ENCODE measurements at regions of chr10 and their contacts with region 1.

Region 1: DNA sequence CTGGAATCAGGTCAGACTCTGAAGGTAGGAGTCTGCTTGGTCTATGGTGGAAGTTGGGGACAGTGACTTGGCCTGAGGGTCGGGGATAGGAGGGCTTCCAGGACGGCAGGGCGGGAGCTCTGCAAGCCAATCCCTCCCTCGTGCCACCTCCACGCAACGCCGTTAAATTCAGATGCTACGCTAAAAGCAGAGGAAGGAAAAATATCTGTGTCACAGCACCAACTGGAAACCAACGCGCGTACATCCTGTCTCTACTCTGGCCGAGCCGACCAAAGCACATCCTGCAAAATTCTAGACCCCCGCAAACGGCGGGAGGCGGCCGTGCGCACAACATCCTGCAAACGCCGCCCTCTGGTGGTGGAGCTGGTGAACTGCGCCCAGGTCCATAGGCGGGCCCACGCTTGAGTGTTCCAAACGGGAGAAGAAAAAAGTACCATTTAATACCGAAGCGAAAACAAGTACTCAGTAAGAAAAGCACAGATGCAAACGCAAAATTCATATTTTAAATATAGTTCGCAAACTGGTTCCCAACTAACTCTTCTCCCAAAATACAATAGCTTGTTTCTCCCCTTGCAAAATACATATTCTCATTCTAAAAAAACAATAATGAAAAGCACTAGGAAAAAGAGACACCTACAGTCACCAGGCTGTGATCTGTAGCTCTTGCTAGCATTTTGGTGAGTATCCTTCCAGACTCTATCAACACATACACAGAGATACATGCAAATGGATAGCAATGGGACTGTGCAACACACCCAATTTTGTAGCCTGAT is 45.7 kb upstream of the HSPA12A start:
- DNase-seq: peak; percentile 76
- H3K4me3 ChIP-seq: no peak overlapping the region
- H3K27ac ChIP-seq: no peak overlapping the region
- H3K4me1 ChIP-seq: no peaks in the 10 kb centered on the region
- H3K27me3 ChIP-seq: no peaks in the 10 kb centered on the region
- CTCF ChIP-seq: peak; percentile 100

Region 2: GRCh38 chr10:116627386-116627933 is 160.6 kb before region 1 on chr10:
- intact Hi-C with region 1: loop called (anchors 5 kb)
- DNase-seq: peak; percentile 71
- H3K4me3 ChIP-seq: peak overlapping the region; percentile 51
- H3K27ac ChIP-seq: no peak overlapping the region
- H3K4me1 ChIP-seq: no peaks in the 10 kb centered on the region
- H3K27me3 ChIP-seq: no peaks in the 10 kb centered on the region
- CTCF ChIP-seq: peak; percentile 48

Region 3: DNA sequence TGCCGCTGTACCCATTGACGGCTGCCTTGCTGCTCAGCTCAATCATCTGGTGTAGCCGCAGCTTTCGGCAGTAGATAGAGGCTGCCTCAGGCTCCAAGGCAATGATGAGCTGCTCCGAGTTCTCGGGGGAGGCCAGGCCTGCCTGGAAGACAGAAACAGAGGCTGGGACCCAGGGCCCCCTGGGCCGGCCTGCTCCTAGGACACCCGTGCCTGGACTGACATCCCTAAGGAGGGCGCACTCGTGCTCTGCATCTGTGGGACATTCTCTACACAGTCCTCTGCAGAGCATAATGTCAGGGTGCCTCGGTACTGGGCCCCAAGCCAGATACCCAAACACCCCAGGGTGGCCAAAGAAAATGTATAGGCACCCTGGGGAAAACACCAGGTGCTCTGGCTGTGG is 104.3 kb before region 1 on chr10:
- intact Hi-C with region 1: loop called (anchors 2 kb)
- DNase-seq: no peak
- H3K4me3 ChIP-seq: no peak overlapping the region
- H3K27ac ChIP-seq: no peak overlapping the region
- H3K4me1 ChIP-seq: no peaks in the 10 kb centered on the region
- H3K27me3 ChIP-seq: no peaks in the 10 kb centered on the region
- CTCF ChIP-seq: no peak